Natural killer cell (primary cell): ENCODE measurements at regions of chr12 and their contacts with region 1.

Region 1: GRCh38 chr12:56724972-56725722 is at the start of gene NACA:
- DNase-seq: peak; percentile 92 to 99
- ATAC-seq: peak; percentile 92 to 98 (median 93)
- H3K4me3 ChIP-seq: peak within 1 kb of the TSS; percentile 99
- H3K4me3 Mint-ChIP-seq: peak within 1 kb of the TSS; percentile 99
- H3K27ac ChIP-seq: peak within 1 kb of the TSS; percentile 98
- H3K27ac Mint-ChIP-seq: peak within 1 kb of the TSS; percentile 98
- H3K4me1 ChIP-seq: peaks cover 38% of the 10 kb centered on the region
- H3K4me1 Mint-ChIP-seq: peaks cover 58 to 60% of the 10 kb centered on the region in 2 donors
- H3K27me3 ChIP-seq: no peaks in the 10 kb centered on the region
- H3K27me3 Mint-ChIP-seq: no peaks in the 10 kb centered on the region
- CTCF ChIP-seq: no peak
- total RNA-seq, gene NACA: 644 to 785 (median 695) TPM

Region 2: GRCh38 chr12:56488041-56488955 is 236.8 kb before region 1 on chr12 and contains the start of gene GLS2:
- intact Hi-C with region 1: no loop called
- DNase-seq: peak; percentile 64 to 87
- ATAC-seq: peak; percentile 96 to 99 (median 98)
- H3K4me3 ChIP-seq: peak within 1 kb of the TSS; percentile 61
- H3K4me3 Mint-ChIP-seq: peak within 1 kb of the TSS; percentile 95
- H3K27ac ChIP-seq: no peak within 1 kb of the TSS
- H3K27ac Mint-ChIP-seq: peak within 1 kb of the TSS in 1 of 2 donors; percentile 71
- H3K4me1 ChIP-seq: peaks cover 18% of the 10 kb centered on the region
- H3K4me1 Mint-ChIP-seq: peaks cover 13 to 18% of the 10 kb centered on the region in 2 donors
- H3K27me3 ChIP-seq: peaks cover 10% of the 10 kb centered on the region
- H3K27me3 Mint-ChIP-seq: peaks cover 22 to 26% of the 10 kb centered on the region in 2 donors
- CTCF ChIP-seq: no peak
- total RNA-seq, gene GLS2: 1.2 to 1.6 (median 1.6) TPM

Region 3: DNA sequence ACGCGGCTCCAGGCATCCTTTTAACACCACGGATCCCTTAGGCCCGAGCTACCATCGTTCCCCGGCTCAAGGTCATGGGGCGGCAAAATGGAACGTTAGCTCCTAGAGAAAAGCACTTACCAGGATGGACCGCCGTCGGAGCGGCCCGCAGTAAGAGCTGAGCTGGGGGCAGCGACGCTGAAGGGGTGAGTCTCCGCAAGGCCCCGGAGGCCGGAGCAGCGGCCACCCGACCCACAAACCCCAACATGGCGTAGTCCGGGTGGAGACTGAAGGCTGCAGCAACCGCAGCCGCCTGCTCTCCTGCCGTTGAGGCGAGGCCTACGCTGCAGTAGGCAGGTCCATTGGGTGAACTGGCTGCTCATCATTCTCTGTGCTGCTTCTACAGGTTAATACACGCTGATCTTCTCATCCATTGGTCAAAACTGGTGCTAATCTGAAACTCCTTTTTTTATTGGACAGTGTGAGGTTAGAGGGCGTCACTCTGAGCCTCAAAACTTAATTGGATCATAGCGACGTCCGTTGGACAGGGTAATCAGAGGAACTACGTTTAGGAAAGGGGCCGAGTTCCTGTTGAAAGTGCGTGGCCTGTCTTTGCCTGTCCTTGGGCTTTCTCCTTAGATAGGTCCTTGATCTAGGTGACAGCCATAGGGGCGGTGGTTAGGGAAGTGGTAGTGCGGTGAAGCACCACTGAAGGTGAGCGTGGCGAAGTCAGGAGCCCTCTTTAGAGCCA is 79.3 kb before region 1 on chr12 and contains the start of gene ATP5F1B:
- intact Hi-C with region 1: loop called (anchors 1 kb)
- DNase-seq: peak; percentile 84 to 97
- ATAC-seq: peak; percentile 96 to 99 (median 96)
- H3K4me3 ChIP-seq: peak within 1 kb of the TSS; percentile 98
- H3K4me3 Mint-ChIP-seq: peak within 1 kb of the TSS; percentile 96
- H3K27ac ChIP-seq: peak within 1 kb of the TSS; percentile 91
- H3K27ac Mint-ChIP-seq: peak within 1 kb of the TSS; percentile 92 to 97
- H3K4me1 ChIP-seq: peaks cover 18% of the 10 kb centered on the region
- H3K4me1 Mint-ChIP-seq: peaks cover 27 to 28% of the 10 kb centered on the region in 2 donors
- H3K27me3 ChIP-seq: no peaks in the 10 kb centered on the region
- H3K27me3 Mint-ChIP-seq: no peaks in the 10 kb centered on the region
- CTCF ChIP-seq: no peak
- total RNA-seq, gene ATP5F1B: 335 to 378 (median 342) TPM

Region 4: GRCh38 chr12:56688129-56688845 is 36.9 kb before region 1 on chr12 and contains the start of gene PTGES3:
- intact Hi-C with region 1: loop called (anchors 1 kb)
- DNase-seq: peak; percentile 96 to 100
- ATAC-seq: peak; percentile 76 to 95 (median 83)
- H3K4me3 ChIP-seq: peak within 1 kb of the TSS; percentile 80
- H3K4me3 Mint-ChIP-seq: peak within 1 kb of the TSS; percentile 98
- H3K27ac ChIP-seq: peak within 1 kb of the TSS; percentile 94
- H3K27ac Mint-ChIP-seq: peak within 1 kb of the TSS; percentile 95 to 99
- H3K4me1 ChIP-seq: peaks cover 36% of the 10 kb centered on the region
- H3K4me1 Mint-ChIP-seq: peaks cover 41 to 44% of the 10 kb centered on the region in 2 donors
- H3K27me3 ChIP-seq: no peaks in the 10 kb centered on the region
- H3K27me3 Mint-ChIP-seq: no peaks in the 10 kb centered on the region
- CTCF ChIP-seq: no peak
- total RNA-seq, gene PTGES3: 79.2 to 93.8 (median 93.4) TPM

Region 5: GRCh38 chr12:56709759-56710376 is 15.3 kb before region 1 on chr12:
- intact Hi-C with region 1: no loop called
- DNase-seq: no peak
- ATAC-seq: peak in 1 of 3 donors; percentile 26
- H3K4me3 ChIP-seq: no peak overlapping the region
- H3K4me3 Mint-ChIP-seq: no peak overlapping the region
- H3K27ac ChIP-seq: no peak overlapping the region
- H3K27ac Mint-ChIP-seq: no peak overlapping the region
- H3K4me1 ChIP-seq: no peaks in the 10 kb centered on the region
- H3K4me1 Mint-ChIP-seq: peaks cover 7 to 9% of the 10 kb centered on the region in 2 donors
- H3K27me3 ChIP-seq: no peaks in the 10 kb centered on the region
- H3K27me3 Mint-ChIP-seq: no peaks in the 10 kb centered on the region
- CTCF ChIP-seq: no peak